PC-9 (cell line): ENCODE measurements at regions of chr6 and their contacts with region 1.

Region 1: DNA sequence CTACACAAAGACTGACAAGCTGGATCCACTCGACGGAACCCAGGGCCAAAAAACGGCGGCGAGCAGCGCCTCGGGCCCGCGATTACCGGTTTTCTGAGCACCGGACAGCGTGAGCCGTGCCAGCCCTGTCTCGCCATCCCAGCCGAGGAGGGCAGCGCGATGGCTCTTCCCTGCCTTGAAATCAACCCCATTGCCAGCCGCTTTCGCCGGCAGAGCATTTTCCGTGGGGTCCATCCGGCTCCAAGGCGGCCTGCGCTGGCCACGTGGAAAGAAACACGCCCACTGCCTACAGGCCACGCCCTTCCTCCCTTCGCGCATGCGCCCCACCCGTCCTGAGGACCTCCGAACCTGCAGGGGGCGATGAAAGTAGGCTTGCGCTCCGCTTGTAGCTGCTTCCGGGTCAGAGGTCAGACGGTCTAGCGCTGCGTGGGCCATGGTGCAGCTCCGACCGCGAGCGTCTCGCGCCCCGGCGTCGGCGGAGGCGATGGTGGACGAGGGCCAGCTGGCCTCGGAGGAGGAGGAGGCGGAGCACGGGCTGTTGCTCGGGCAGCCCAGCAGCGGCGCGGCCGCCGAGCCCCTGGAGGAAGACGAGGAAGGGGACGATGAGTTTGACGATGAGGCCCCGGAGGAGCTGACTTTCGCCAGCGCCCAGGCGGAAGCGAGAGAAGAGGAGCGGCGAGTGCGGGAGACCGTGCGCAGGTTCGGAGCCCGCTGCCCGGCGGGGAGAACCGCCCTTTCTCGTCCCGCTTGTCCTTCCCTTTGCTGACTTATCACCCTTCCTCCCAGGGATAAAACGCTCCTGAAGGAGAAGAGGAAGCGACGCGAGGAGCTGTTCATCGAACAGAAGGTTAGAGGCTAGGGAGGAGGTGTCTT is at the start of gene NOL7:
- DNase-seq: peak; percentile 91 to 98
- H3K4me3 ChIP-seq: peak within 1 kb of the TSS; percentile 98
- H3K27ac ChIP-seq: peak within 1 kb of the TSS; percentile 88
- H3K4me1 ChIP-seq: peaks cover 23% of the 10 kb centered on the region
- H3K27me3 ChIP-seq: no peaks in the 10 kb centered on the region
- CTCF ChIP-seq: peak; percentile 76
- total RNA-seq, gene NOL7: 75.9 and 78.6 TPM in 2 replicates

Region 2: GRCh38 chr6:13194852-13195251 is 420.3 kb before region 1 on chr6:
- CTCF ChIA-PET with region 1: interaction called, 3 read pairs
- POLR2A ChIA-PET with region 1: interaction called, 37 read pairs
- intact Hi-C with region 1: no loop called
- DNase-seq: peak in 1 of 2 experiments; percentile 21
- H3K4me3 ChIP-seq: no peak overlapping the region
- H3K27ac ChIP-seq: no peak overlapping the region
- H3K4me1 ChIP-seq: no peaks in the 10 kb centered on the region
- H3K27me3 ChIP-seq: peaks cover 36% of the 10 kb centered on the region
- CTCF ChIP-seq: no peak; the same call in 1 of the 2 replicates

Region 3: GRCh38 chr6:13336553-13336952 is 278.6 kb before region 1 on chr6:
- CTCF ChIA-PET with region 1: no interaction called
- POLR2A ChIA-PET with region 1: no interaction called
- intact Hi-C with region 1: loop called (anchors 2 kb)
- DNase-seq: peak; percentile 52 to 80
- H3K4me3 ChIP-seq: no peak overlapping the region
- H3K27ac ChIP-seq: no peak overlapping the region
- H3K4me1 ChIP-seq: no peaks in the 10 kb centered on the region; the same call in 1 of the 2 replicates
- H3K27me3 ChIP-seq: no peaks in the 10 kb centered on the region
- CTCF ChIP-seq: peak; percentile 98

Region 4: GRCh38 chr6:13711733-13712598 is 96.8 kb after region 1 on chr6 and contains the start of gene RANBP9:
- CTCF ChIA-PET with region 1: no interaction called
- POLR2A ChIA-PET with region 1: interaction called, 9 read pairs
- intact Hi-C with region 1: loop called (anchors 2 kb)
- DNase-seq: peak; percentile 61 to 93
- H3K4me3 ChIP-seq: peak within 1 kb of the TSS; percentile 87
- H3K27ac ChIP-seq: peak within 1 kb of the TSS; percentile 83
- H3K4me1 ChIP-seq: peaks cover 56% of the 10 kb centered on the region
- H3K27me3 ChIP-seq: no peaks in the 10 kb centered on the region
- CTCF ChIP-seq: no peak
- total RNA-seq, gene RANBP9: 44.0 and 73.8 TPM in 2 replicates

Region 5: DNA sequence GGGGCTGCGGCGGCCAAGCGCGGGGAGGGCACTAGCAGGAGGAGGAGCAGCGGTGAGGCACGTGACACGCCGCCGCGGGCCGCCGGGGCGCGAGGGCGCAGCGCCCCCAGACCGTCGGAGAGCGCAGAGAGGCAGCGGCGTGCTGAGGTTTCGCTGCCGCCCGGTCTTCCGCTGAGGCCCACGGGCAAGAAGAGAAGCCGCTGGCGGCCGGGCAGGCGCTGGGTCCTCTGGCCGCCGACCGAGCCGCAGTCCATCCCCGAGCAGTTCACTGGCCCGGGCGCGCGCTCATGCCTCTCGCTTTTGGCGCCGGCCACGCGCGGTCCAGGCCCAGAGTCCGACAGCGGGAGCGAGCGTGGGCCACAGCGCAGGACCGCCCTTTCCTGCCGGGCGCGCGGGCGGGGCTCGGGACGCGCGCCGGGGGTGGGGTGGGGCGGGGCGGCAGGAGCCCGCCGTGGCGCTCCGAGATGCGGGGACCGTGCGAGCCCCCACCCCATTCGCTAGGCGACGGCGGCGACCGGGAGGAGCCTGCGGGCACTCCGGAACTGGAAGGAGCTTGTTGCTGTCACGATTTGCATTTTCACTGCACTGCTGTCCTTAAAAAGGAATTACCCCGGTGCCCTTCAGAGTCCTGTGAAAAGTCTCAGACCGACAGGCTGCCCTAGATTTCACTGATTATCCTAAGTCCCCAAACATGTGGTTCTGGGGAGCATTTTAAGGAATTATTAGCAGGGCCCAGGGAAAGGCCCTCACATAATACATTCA is 199.2 kb after region 1 on chr6 and contains the start of gene MCUR1:
- CTCF ChIA-PET with region 1: interaction called, 4 read pairs
- POLR2A ChIA-PET with region 1: interaction called, 7 read pairs
- intact Hi-C with region 1: loop called (anchors 1 kb)
- DNase-seq: peak; percentile 63 to 89
- H3K4me3 ChIP-seq: peak within 1 kb of the TSS; percentile 57
- H3K27ac ChIP-seq: peak within 1 kb of the TSS; percentile 66
- H3K4me1 ChIP-seq: peaks cover 34% of the 10 kb centered on the region
- H3K27me3 ChIP-seq: no peaks in the 10 kb centered on the region
- CTCF ChIP-seq: no peak
- total RNA-seq, gene MCUR1: 38.8 and 45.9 TPM in 2 replicates